ENCODE measurements at regions of chr1 and their contacts with region 1.

Region 1: DNA sequence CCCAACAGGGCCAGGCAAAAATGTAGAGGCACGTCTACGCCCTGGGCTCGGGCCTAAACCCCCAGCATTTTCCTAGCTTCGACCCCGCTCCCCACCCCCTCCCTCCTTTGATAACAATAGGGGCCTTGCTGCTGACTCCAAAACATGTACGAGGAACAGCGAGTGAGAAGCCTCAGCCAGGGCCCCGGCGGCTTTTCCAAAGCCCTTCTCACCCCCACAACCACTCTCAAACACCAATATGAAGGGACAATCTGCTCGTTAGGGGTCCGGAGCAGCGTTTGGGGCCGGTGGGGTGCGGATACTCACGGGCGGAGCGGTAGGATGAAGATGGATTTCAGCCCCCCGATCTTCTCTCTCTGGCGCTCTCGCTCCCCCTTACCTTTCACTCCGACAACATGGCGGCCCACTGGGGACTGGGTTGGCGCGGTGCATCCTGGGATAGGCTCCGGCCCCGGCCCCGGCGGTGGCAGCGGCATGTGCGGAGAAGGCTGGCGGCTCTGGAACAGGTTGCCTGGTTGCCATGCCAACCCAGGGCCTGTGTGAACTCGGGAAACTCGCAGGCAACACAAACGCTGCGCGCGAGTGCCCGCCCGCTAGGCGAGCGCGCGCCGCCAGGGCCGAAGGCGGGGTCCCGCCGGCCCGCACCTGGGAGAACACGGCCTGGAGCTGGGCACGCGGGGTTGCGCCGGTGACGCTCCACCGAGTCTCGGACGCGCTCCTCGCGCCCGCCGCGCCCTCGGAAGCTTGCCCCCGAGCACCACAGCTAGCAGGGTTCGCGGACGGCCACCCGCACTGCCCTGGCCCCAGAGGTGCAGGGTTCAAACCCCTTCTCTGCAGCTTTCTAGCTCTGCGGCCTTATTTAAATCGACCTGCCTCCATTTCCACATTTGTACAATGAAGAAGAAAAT is at the start of gene PUM1:
- DNase-seq: peak; percentile 99
- ATAC-seq: peak; percentile 97
- H3K4me3 Mint-ChIP-seq: peak within 1 kb of the TSS; percentile 92
- H3K27ac Mint-ChIP-seq: peak within 1 kb of the TSS; percentile 99
- H3K4me1 Mint-ChIP-seq: peaks cover 22% of the 10 kb centered on the region
- H3K27me3 Mint-ChIP-seq: no peaks in the 10 kb centered on the region
- total RNA-seq, gene PUM1: 87.1 to 91.4 TPM

Region 2: GRCh38 chr1:29230553-29231378 is 1834.8 kb before region 1 on chr1 and contains the start of gene MECR:
- CTCF ChIA-PET with region 1: no interaction called
- POLR2A ChIA-PET with region 1: no interaction called
- intact Hi-C with region 1: loop called in 1 of 2 experiments (anchors 10 kb)
- DNase-seq: peak; percentile 97
- ATAC-seq: peak; percentile 97
- H3K4me3 Mint-ChIP-seq: peak within 1 kb of the TSS; percentile 94
- H3K27ac Mint-ChIP-seq: peak within 1 kb of the TSS; percentile 94
- H3K4me1 Mint-ChIP-seq: peaks cover 18% of the 10 kb centered on the region
- H3K27me3 Mint-ChIP-seq: peaks cover 9% of the 10 kb centered on the region
- total RNA-seq, gene MECR: 41.3 to 43.1 TPM

Region 3: GRCh38 chr1:30756545-30757195 is 308.9 kb before region 1 on chr1:
- CTCF ChIA-PET with region 1: no interaction called
- POLR2A ChIA-PET with region 1: no interaction called
- intact Hi-C with region 1: loop called in 1 of 2 experiments (anchors 10 kb)
- DNase-seq: peak; percentile 84
- ATAC-seq: peak; percentile 54
- H3K4me3 Mint-ChIP-seq: peak overlapping the region; percentile 92
- H3K27ac Mint-ChIP-seq: peak overlapping the region; percentile 99
- H3K4me1 Mint-ChIP-seq: peaks cover 81% of the 10 kb centered on the region
- H3K27me3 Mint-ChIP-seq: no peaks in the 10 kb centered on the region

Region 4: GRCh38 chr1:31027693-31028526 is 37.7 kb before region 1 on chr1:
- CTCF ChIA-PET with region 1: no interaction called
- POLR2A ChIA-PET with region 1: no interaction called
- intact Hi-C with region 1: loop called in 1 of 2 experiments (anchors 5 kb)
- DNase-seq: no peak
- ATAC-seq: no peak
- H3K4me3 Mint-ChIP-seq: no peak overlapping the region
- H3K27ac Mint-ChIP-seq: peak overlapping the region; percentile 5
- H3K4me1 Mint-ChIP-seq: peaks cover 76% of the 10 kb centered on the region
- H3K27me3 Mint-ChIP-seq: no peaks in the 10 kb centered on the region

Region 5: GRCh38 chr1:31155216-31155841 is 89.8 kb after region 1 on chr1:
- CTCF ChIA-PET with region 1: no interaction called
- POLR2A ChIA-PET with region 1: no interaction called
- intact Hi-C with region 1: loop called in 1 of 2 experiments (anchors 1 kb)
- DNase-seq: peak; percentile 79
- ATAC-seq: peak; percentile 82
- H3K4me3 Mint-ChIP-seq: peak overlapping the region; percentile 88
- H3K27ac Mint-ChIP-seq: peak overlapping the region; percentile 87
- H3K4me1 Mint-ChIP-seq: peaks cover 8% of the 10 kb centered on the region
- H3K27me3 Mint-ChIP-seq: no peaks in the 10 kb centered on the region

Region 6: DNA sequence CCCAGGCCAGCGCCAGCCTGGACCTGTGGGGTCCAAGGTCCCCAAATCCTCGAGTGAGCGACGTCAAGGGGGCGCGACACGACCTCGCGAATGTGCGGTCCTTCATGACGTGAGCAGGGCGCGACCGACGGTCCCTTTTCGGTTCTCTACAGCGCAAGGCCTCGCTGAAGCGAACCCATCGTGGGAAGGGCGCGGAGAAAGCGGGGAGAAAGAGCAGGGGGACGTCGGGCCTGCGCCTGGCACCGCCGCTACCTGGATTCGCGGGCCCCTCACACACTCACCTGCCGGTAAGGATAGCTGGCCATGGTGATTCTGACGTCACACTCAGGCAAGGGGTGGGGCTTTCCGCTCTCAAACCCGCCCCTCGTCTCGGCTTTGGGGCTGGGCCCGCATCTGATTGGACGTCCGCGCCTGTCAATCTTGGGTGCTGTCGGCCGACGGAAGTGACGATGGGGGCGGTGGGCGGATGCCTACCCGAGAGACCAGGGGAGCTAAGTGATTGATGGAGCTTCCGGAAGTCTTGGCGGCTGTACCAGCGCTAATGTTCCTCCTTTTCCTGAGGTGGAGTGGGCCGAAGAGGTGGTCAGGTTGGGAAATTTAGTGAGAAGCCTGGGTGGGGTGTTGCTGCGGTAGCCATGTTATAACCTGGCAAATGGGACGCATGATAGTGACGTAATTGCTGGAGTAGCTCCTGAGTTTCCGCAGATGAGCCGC is 579.2 kb after region 1 on chr1 and contains the start of gene PEF1:
- CTCF ChIA-PET with region 1: no interaction called
- POLR2A ChIA-PET with region 1: no interaction called
- intact Hi-C with region 1: loop called in 1 of 2 experiments (anchors 1 kb)
- DNase-seq: peak; percentile 100
- ATAC-seq: peak; percentile 91
- H3K4me3 Mint-ChIP-seq: peak within 1 kb of the TSS; percentile 95
- H3K27ac Mint-ChIP-seq: peak within 1 kb of the TSS; percentile 100
- H3K4me1 Mint-ChIP-seq: peaks cover 23% of the 10 kb centered on the region
- H3K27me3 Mint-ChIP-seq: no peaks in the 10 kb centered on the region
- total RNA-seq, gene PEF1: 48.8 to 59.3 TPM

Region 7: GRCh38 chr1:31938174-31938950 is 872.8 kb after region 1 on chr1 and contains the start of gene PTP4A2:
- CTCF ChIA-PET with region 1: no interaction called
- POLR2A ChIA-PET with region 1: no interaction called
- intact Hi-C with region 1: loop called in 1 of 2 experiments (anchors 5 kb)
- DNase-seq: peak; percentile 93
- ATAC-seq: peak; percentile 63
- H3K4me3 Mint-ChIP-seq: peak within 1 kb of the TSS; percentile 91
- H3K27ac Mint-ChIP-seq: peak within 1 kb of the TSS; percentile 99
- H3K4me1 Mint-ChIP-seq: peaks cover 63% of the 10 kb centered on the region
- H3K27me3 Mint-ChIP-seq: no peaks in the 10 kb centered on the region
- total RNA-seq, gene PTP4A2: 279 to 314 TPM